MCF 10A (cell line): ENCODE measurements at regions of chr2 and their contacts with region 1.

Region 1: GRCh38 chr2:206512999-206513398 is 69.7 kb downstream of the ADAM23 start:
- DNase-seq: no peak
- H3K4me3 Mint-ChIP-seq: no peak overlapping the region
- H3K27ac Mint-ChIP-seq: no peak overlapping the region
- H3K4me1 Mint-ChIP-seq: peaks cover 5% of the 10 kb centered on the region
- H3K27me3 Mint-ChIP-seq: peaks cover 28% of the 10 kb centered on the region
- CTCF ChIP-seq: no peak

Region 2: GRCh38 chr2:206296128-206296527 is 216.9 kb before region 1 on chr2:
- CTCF ChIA-PET with region 1: no interaction called
- POLR2A ChIA-PET with region 1: no interaction called
- intact Hi-C with region 1: no loop called
- DNase-seq: peak; percentile 67
- H3K4me3 Mint-ChIP-seq: no peak overlapping the region
- H3K27ac Mint-ChIP-seq: no peak overlapping the region
- H3K4me1 Mint-ChIP-seq: peaks cover 8% of the 10 kb centered on the region
- H3K27me3 Mint-ChIP-seq: no peaks in the 10 kb centered on the region
- CTCF ChIP-seq: no peak

Region 3: DNA sequence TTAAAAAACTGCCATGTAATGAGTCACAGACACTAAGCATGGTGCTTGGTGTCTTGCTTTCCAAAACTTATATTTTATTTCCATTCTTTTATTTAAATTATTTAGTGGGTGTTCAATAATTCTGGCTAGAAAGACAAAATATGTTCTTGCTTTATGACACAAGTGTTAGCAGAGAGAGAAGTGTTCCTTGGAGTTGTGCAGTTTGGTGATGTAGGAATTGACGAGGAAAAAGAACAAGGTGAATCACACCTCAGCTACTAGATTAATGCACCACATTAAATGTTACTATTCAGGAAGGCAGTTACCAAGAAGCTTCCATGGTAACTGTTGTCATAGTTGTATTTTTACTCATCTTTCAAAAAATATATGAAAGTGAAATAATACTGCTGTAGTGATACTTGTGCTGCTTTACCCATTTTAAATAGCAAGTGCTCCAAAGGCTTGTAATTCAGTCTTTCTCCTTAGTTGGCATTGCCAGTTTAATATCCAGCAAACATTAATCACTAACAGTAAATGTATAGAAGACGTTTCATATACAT is 41.4 kb before region 1 on chr2:
- CTCF ChIA-PET with region 1: interaction called, 10 read pairs
- POLR2A ChIA-PET with region 1: no interaction called
- intact Hi-C with region 1: no loop called
- DNase-seq: no peak
- H3K4me3 Mint-ChIP-seq: no peak overlapping the region
- H3K27ac Mint-ChIP-seq: no peak overlapping the region
- H3K4me1 Mint-ChIP-seq: no peaks in the 10 kb centered on the region
- H3K27me3 Mint-ChIP-seq: no peaks in the 10 kb centered on the region
- CTCF ChIP-seq: no peak